ENCODE measurements at regions of chr6 and their contacts with region 1.

Region 1: GRCh38 chr6:118565311-118565960 is 17.3 kb downstream of the PLN start:
- DNase-seq: peak; percentile 36
- ATAC-seq: peak; percentile 87
- H3K4me3 ChIP-seq: no peak overlapping the region
- H3K27ac ChIP-seq: no peak overlapping the region
- H3K4me1 ChIP-seq: no peaks in the 10 kb centered on the region
- H3K27me3 ChIP-seq: no peaks in the 10 kb centered on the region
- CTCF ChIP-seq: peak; percentile 70
- EP300 ChIP-seq: no peak
- POLR2A ChIP-seq: no peak
- RAD21 ChIP-seq: peak; percentile 25; the same call in 1 of the 2 replicates

Region 2: DNA sequence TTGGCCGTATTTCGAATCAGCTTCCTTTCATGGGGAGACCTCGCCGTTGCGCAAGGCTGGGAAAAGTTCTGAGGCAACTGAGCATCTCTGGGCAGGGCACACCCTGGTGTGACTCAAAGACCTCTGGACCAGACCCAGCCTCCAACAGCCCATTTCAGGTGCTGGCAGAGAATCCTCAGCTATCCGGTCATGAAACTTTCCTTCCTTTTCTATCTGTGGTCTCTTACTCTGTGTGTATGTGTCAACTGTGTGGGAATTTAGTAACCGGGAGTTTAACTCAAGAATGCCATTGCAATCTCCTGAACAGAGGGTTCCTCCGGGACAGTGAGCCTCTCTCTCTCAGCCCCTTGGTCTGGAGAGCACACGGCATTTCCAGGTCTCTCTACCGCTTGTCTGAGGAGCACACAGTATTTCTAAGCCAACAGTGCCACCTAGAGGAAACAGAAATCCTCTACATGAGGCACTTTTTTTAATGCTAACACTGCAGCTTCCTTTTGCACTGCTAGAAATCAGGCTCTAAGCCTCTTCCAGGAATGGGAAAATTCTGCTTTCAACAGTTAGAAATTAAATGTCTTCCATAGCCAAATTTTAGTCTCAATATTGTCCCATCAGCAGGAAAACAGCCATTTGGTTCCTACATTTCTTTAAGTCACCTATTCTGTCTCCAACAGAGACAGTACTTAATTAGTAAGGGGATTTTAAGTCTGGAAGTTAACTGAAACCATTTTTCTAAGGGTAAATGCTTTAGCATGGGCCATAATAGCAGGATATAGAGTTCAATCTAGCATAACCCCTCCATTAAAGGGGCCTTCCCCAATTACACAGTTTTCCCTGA is 15.4 kb after region 1 on chr6:
- CTCF ChIA-PET with region 1: no interaction called
- POLR2A ChIA-PET with region 1: no interaction called
- in situ Hi-C with region 1: no loop called
- intact Hi-C with region 1: loop called (anchors 2 kb)
- DNase-seq: peak; percentile 75
- ATAC-seq: peak; percentile 97
- H3K4me3 ChIP-seq: no peak overlapping the region
- H3K27ac ChIP-seq: no peak overlapping the region
- H3K4me1 ChIP-seq: no peaks in the 10 kb centered on the region
- H3K27me3 ChIP-seq: no peaks in the 10 kb centered on the region; a peak in 1 of 5 replicates
- CTCF ChIP-seq: peak; percentile 92
- EP300 ChIP-seq: no peak
- POLR2A ChIP-seq: no peak
- RAD21 ChIP-seq: peak; percentile 88

Region 3: DNA sequence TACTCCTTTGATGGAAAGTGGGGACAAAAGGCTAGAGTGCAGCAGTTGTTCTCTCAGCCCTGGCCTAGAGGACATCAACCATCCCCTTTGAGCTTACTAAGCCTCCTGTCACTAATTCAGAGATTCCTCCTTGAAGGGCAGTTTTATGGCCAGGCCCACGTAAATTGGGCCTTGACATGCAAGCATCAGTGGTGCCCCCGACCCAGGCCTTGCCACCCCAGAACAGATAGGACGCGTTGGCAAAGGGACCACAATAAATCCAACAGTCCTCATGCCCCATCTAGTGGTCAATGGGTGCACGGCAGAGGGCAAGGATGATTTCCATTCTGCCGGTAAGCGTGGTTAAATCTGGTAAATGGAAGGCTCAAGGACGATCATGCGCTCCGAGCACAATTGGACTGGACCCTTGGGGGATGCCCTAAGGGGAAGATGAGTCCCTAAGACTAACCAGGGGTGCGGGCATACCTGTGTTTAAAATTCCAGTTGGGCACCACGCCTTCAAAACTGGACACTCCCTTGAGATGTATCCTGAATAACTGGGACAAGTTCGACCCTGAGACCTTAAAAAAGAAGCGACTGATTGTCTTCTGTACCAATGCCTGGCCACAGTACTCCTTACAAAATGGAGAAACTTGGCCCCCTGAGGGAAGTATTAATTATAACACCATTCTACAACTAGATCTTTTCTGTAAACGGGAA is 53.4 kb after region 1 on chr6:
- CTCF ChIA-PET with region 1: no interaction called
- POLR2A ChIA-PET with region 1: no interaction called
- in situ Hi-C with region 1: no loop called
- intact Hi-C with region 1: loop called (anchors 2 kb)
- DNase-seq: peak; percentile 43
- ATAC-seq: peak; percentile 97
- H3K4me3 ChIP-seq: no peak overlapping the region
- H3K27ac ChIP-seq: no peak overlapping the region
- H3K4me1 ChIP-seq: no peaks in the 10 kb centered on the region
- H3K27me3 ChIP-seq: peaks cover 0 to 13% of the 10 kb centered on the region in 2 experiments; a peak in 2 of 5 replicates
- CTCF ChIP-seq: peak; percentile 95
- EP300 ChIP-seq: no peak
- POLR2A ChIP-seq: no peak
- RAD21 ChIP-seq: peak; percentile 59

Region 4: GRCh38 chr6:118735320-118735719 is 169.9 kb after region 1 on chr6:
- CTCF ChIA-PET with region 1: no interaction called
- POLR2A ChIA-PET with region 1: no interaction called
- in situ Hi-C with region 1: no loop called
- intact Hi-C with region 1: loop called (anchors 1 kb)
- DNase-seq: peak; percentile 12
- ATAC-seq: peak; percentile 89
- H3K4me3 ChIP-seq: no peak overlapping the region
- H3K27ac ChIP-seq: no peak overlapping the region
- H3K4me1 ChIP-seq: no peaks in the 10 kb centered on the region
- H3K27me3 ChIP-seq: peaks cover 0 to 26% of the 10 kb centered on the region in 2 experiments; a peak in 2 of 5 replicates
- CTCF ChIP-seq: peak; percentile 54
- EP300 ChIP-seq: no peak
- POLR2A ChIP-seq: no peak
- RAD21 ChIP-seq: no peak

Region 5: GRCh38 chr6:118776607-118777549 is 211.4 kb after region 1 on chr6:
- CTCF ChIA-PET with region 1: no interaction called
- POLR2A ChIA-PET with region 1: no interaction called
- in situ Hi-C with region 1: no loop called
- intact Hi-C with region 1: loop called (anchors 5 kb)
- DNase-seq: peak; percentile 64
- ATAC-seq: peak; percentile 91
- H3K4me3 ChIP-seq: no peak overlapping the region
- H3K27ac ChIP-seq: no peak overlapping the region
- H3K4me1 ChIP-seq: no peaks in the 10 kb centered on the region
- H3K27me3 ChIP-seq: peaks cover 0 to 10% of the 10 kb centered on the region in 2 experiments; a peak in 3 of 5 replicates
- CTCF ChIP-seq: peak; percentile 70
- EP300 ChIP-seq: no peak
- POLR2A ChIP-seq: no peak
- RAD21 ChIP-seq: peak; percentile 47

Region 6: DNA sequence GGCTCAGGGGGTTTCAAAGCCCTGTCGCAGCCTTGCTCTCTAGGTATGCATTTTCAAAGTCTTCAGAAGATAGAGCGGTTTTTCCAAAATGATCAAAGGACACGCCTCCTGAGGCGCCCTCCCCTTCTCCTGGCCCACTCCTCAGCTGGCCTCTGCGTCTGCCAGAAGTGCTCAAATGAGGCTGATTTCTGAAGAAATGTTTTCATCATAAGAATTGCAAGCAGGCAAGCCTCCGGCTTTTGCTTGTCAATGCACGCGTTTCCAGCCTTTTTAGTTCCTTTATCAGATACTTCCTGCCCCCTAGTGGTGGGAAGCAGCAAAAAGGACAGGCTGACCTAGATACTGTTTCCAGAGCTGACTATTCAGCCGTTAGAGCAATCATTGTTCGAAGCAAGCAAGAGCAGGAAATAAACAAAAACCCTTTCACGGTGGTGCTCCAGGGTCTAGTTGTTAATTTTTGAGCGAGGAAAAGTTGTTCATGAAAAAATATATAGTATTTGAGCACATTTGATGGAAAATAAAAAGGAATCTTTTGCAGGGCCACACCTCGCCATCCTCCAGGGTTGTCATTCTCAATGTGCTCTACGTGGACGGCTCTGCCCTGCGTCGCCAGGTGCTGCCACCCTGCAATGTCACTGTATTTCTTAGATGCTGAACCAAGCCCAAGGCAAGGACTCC is 235.1 kb after region 1 on chr6:
- CTCF ChIA-PET with region 1: no interaction called
- POLR2A ChIA-PET with region 1: no interaction called
- in situ Hi-C with region 1: no loop called
- intact Hi-C with region 1: loop called (anchors 10 kb)
- DNase-seq: peak; percentile 82
- ATAC-seq: peak; percentile 94
- H3K4me3 ChIP-seq: peak overlapping the region in 1 of 3 experiments; percentile 31; a peak in 2 of 6 replicates
- H3K27ac ChIP-seq: no peak overlapping the region
- H3K4me1 ChIP-seq: peaks cover 16% of the 10 kb centered on the region
- H3K27me3 ChIP-seq: no peaks in the 10 kb centered on the region
- CTCF ChIP-seq: peak; percentile 92
- EP300 ChIP-seq: no peak
- POLR2A ChIP-seq: no peak
- RAD21 ChIP-seq: peak; percentile 63

Measured in HepG2 (cell line).